Naive thymus-derived CD4-positive, alpha-beta T cell (primary cell): ENCODE measurements at regions of chr2 and their contacts with region 1.

Region 1: GRCh38 chr2:234374736-234375135 is 122.1 kb downstream of the ARL4C start:
- DNase-seq: no peak
- ATAC-seq: no peak
- H3K4me3 ChIP-seq: no peak overlapping the region
- H3K4me3 Mint-ChIP-seq: peak overlapping the region in 2 of 10 donors; percentile 35 to 76
- H3K27ac ChIP-seq: no peak overlapping the region
- H3K27ac Mint-ChIP-seq: peak overlapping the region; percentile 57 to 98 (median 94)
- H3K4me1 ChIP-seq: peaks cover 7 to 47% of the 10 kb centered on the region in 2 donors
- H3K4me1 Mint-ChIP-seq: peaks cover 26 to 74% (median 62%) of the 10 kb centered on the region in 7 donors
- H3K27me3 ChIP-seq: no peaks in the 10 kb centered on the region
- H3K27me3 Mint-ChIP-seq: no peaks in the 10 kb centered on the region

Region 2: GRCh38 chr2:234135720-234136221 is 239.0 kb before region 1 on chr2:
- CTCF ChIA-PET with region 1: interaction called, 3 read pairs
- POLR2A ChIA-PET with region 1: no interaction called
- intact Hi-C with region 1: loop called in 1 of 2 experiments (anchors 5 kb)
- DNase-seq: peak; percentile 13 to 52 (median 40)
- ATAC-seq: peak; percentile 73
- H3K4me3 ChIP-seq: peak overlapping the region; percentile 2
- H3K4me3 Mint-ChIP-seq: peak overlapping the region in 2 of 10 donors; percentile 9 to 30
- H3K27ac ChIP-seq: no peak overlapping the region
- H3K27ac Mint-ChIP-seq: peak overlapping the region; percentile 31 to 83 (median 56)
- H3K4me1 ChIP-seq: peaks cover 23 to 24% of the 10 kb centered on the region in 2 donors
- H3K4me1 Mint-ChIP-seq: peaks cover 6 to 31% (median 29%) of the 10 kb centered on the region in 7 donors
- H3K27me3 ChIP-seq: no peaks in the 10 kb centered on the region
- H3K27me3 Mint-ChIP-seq: peaks cover 0 to 17% (median 0%) of the 10 kb centered on the region in 5 donors

Region 3: GRCh38 chr2:234146087-234146826 is 228.5 kb before region 1 on chr2:
- CTCF ChIA-PET with region 1: interaction called, 3 read pairs
- POLR2A ChIA-PET with region 1: no interaction called
- intact Hi-C with region 1: loop called in 1 of 2 experiments (anchors 5 kb)
- DNase-seq: no peak
- ATAC-seq: no peak
- H3K4me3 ChIP-seq: no peak overlapping the region
- H3K4me3 Mint-ChIP-seq: peak overlapping the region; percentile 17 to 74 (median 46)
- H3K27ac ChIP-seq: no peak overlapping the region
- H3K27ac Mint-ChIP-seq: peak overlapping the region in 8 of 9 donors; percentile 25 to 87 (median 68)
- H3K4me1 ChIP-seq: peaks cover 29 to 37% of the 10 kb centered on the region in 2 donors
- H3K4me1 Mint-ChIP-seq: peaks cover 19 to 57% (median 44%) of the 10 kb centered on the region in 7 donors
- H3K27me3 ChIP-seq: no peaks in the 10 kb centered on the region
- H3K27me3 Mint-ChIP-seq: no peaks in the 10 kb centered on the region

Region 4: GRCh38 chr2:234335661-234336228 is 39.0 kb before region 1 on chr2:
- CTCF ChIA-PET with region 1: no interaction called
- POLR2A ChIA-PET with region 1: interaction called, 4 read pairs
- intact Hi-C with region 1: loop called in 1 of 2 experiments (anchors 2 kb)
- DNase-seq: peak in 8 of 9 donors; percentile 33 to 75 (median 70)
- ATAC-seq: peak; percentile 92
- H3K4me3 ChIP-seq: peak overlapping the region; percentile 3
- H3K4me3 Mint-ChIP-seq: peak overlapping the region; percentile 56 to 85 (median 78)
- H3K27ac ChIP-seq: peak overlapping the region; percentile 24
- H3K27ac Mint-ChIP-seq: peak overlapping the region; percentile 61 to 98 (median 93)
- H3K4me1 ChIP-seq: peaks cover 0 to 16% of the 10 kb centered on the region in 2 donors
- H3K4me1 Mint-ChIP-seq: peaks cover 15 to 60% (median 45%) of the 10 kb centered on the region in 7 donors
- H3K27me3 ChIP-seq: no peaks in the 10 kb centered on the region
- H3K27me3 Mint-ChIP-seq: no peaks in the 10 kb centered on the region

Region 5: GRCh38 chr2:234363011-234363487 is 11.7 kb before region 1 on chr2:
- CTCF ChIA-PET with region 1: no interaction called
- POLR2A ChIA-PET with region 1: interaction called, 10 read pairs
- intact Hi-C with region 1: no loop called
- DNase-seq: no peak
- ATAC-seq: no peak
- H3K4me3 ChIP-seq: no peak overlapping the region
- H3K4me3 Mint-ChIP-seq: no peak overlapping the region
- H3K27ac ChIP-seq: no peak overlapping the region
- H3K27ac Mint-ChIP-seq: peak overlapping the region in 2 of 9 donors; percentile 29 to 72
- H3K4me1 ChIP-seq: peaks cover 10 to 19% of the 10 kb centered on the region in 2 donors
- H3K4me1 Mint-ChIP-seq: peaks cover 10 to 55% (median 53%) of the 10 kb centered on the region in 7 donors
- H3K27me3 ChIP-seq: no peaks in the 10 kb centered on the region
- H3K27me3 Mint-ChIP-seq: no peaks in the 10 kb centered on the region

Region 6: GRCh38 chr2:234392041-234392615 is 17.4 kb after region 1 on chr2:
- CTCF ChIA-PET with region 1: interaction called, 3 read pairs
- POLR2A ChIA-PET with region 1: interaction called, 4 read pairs
- intact Hi-C with region 1: loop called in 1 of 2 experiments (anchors 1 kb)
- DNase-seq: no peak
- ATAC-seq: no peak
- H3K4me3 ChIP-seq: no peak overlapping the region
- H3K4me3 Mint-ChIP-seq: peak overlapping the region in 9 of 10 donors; percentile 35 to 84 (median 46)
- H3K27ac ChIP-seq: peak overlapping the region; percentile 53
- H3K27ac Mint-ChIP-seq: peak overlapping the region; percentile 17 to 98 (median 94)
- H3K4me1 ChIP-seq: peaks cover 21 to 53% of the 10 kb centered on the region in 2 donors
- H3K4me1 Mint-ChIP-seq: peaks cover 34 to 73% (median 65%) of the 10 kb centered on the region in 7 donors
- H3K27me3 ChIP-seq: no peaks in the 10 kb centered on the region
- H3K27me3 Mint-ChIP-seq: no peaks in the 10 kb centered on the region